Gastrocnemius medialis (tissue), 4 donors: ENCODE measurements at regions of chr17 and their contacts with region 1.

Region 1: DNA sequence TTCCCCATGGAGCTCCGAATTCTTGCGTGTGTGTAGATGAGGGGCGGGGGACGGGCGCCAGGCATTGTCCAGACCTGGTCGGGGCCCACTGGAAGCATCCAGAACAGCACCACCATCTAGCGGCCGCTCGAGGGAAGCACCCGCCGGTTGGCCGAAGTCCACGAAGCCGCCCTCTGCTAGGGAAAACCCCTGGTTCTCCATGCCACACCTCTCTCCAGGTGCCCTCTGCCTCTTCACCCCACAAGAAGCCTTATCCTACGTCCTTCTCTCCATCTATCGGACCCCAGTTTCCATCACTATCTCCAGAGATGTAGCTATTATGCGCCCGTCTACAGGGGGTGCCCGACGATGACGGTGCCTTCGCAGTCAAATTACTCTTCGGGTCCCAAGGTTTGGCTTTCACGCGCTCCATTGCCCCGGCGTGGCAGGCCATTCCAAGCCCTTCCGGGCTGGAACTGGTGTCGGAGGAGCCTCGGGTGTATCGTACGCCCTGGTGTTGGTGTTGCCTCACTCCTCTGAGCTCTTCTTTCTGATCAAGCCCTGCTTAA is 617 bp upstream of the SENP3 start:
- DNase-seq: peak; percentile 87 to 93
- ATAC-seq: peak; percentile 83
- H3K4me3 ChIP-seq: peak overlapping the region; percentile 87 to 95 (median 88)
- H3K27ac ChIP-seq: peak overlapping the region; percentile 93 to 96 (median 96)
- H3K4me1 ChIP-seq: peaks cover 48 to 62% of the 10 kb centered on the region in 2 donors
- H3K27me3 ChIP-seq: no peaks in the 10 kb centered on the region
- CTCF ChIP-seq: peak; percentile 90 to 91 (median 90)
- POLR2A ChIP-seq: no peak

Region 2: DNA sequence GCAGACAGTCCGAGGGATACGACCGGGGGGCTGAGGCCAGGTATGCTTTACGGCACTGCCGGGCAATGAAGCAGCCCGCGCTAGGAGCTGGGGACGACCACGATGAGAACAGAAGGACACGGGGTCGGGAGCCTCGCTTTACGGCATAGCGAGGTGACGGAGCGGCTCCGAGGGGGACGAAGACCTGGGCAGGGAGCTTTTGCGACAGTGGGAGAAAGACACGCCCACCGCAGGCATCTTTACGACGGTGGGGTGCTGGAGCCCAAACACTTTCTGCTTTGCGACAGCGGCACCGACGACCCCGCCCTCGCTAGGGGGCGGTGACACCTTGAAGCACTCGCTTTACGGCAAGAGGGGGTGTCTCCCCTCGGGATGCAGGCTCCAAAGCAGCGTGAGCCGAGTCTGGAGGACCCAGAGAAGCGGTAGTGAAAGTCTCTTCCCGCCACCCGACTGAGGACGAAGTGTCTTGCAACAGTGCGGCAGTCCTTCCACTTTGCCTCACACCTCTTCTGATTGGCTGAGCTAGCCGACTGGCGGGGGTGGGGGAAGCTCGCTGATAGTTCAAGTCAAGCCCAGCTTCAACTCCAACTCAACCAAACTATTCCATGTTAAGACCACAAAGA is 231.6 kb before region 1 on chr17:
- in situ Hi-C with region 1: no loop called
- intact Hi-C with region 1: loop called (anchors 5 kb)
- DNase-seq: peak; percentile 97 to 99
- ATAC-seq: peak; percentile 87 to 88
- H3K4me3 ChIP-seq: peak overlapping the region; percentile 78 to 99 (median 93)
- H3K27ac ChIP-seq: peak overlapping the region; percentile 94 to 99 (median 96)
- H3K4me1 ChIP-seq: peaks cover 15 to 24% of the 10 kb centered on the region in 2 donors
- H3K27me3 ChIP-seq: peaks cover 0 to 3% (median 2%) of the 10 kb centered on the region in 3 donors
- CTCF ChIP-seq: no peak
- POLR2A ChIP-seq: peak; percentile 87 to 92

Region 3: GRCh38 chr17:7403977-7404736 is 156.9 kb before region 1 on chr17 and contains the start of gene TMEM256:
- in situ Hi-C with region 1: no loop called
- intact Hi-C with region 1: loop called (anchors 2 kb)
- DNase-seq: peak; percentile 100
- ATAC-seq: peak; percentile 90
- H3K4me3 ChIP-seq: peak within 1 kb of the TSS; percentile 62 to 81 (median 70)
- H3K27ac ChIP-seq: peak within 1 kb of the TSS; percentile 92 to 97 (median 92)
- H3K4me1 ChIP-seq: peaks cover 19 to 20% of the 10 kb centered on the region in 2 donors
- H3K27me3 ChIP-seq: no peaks in the 10 kb centered on the region
- CTCF ChIP-seq: peak in 2 of 5 experiments; percentile 13 to 22
- POLR2A ChIP-seq: peak; percentile 94 to 96
- total RNA-seq, gene TMEM256: 28.9 to 65.6 (median 50.2) TPM

Region 4: DNA sequence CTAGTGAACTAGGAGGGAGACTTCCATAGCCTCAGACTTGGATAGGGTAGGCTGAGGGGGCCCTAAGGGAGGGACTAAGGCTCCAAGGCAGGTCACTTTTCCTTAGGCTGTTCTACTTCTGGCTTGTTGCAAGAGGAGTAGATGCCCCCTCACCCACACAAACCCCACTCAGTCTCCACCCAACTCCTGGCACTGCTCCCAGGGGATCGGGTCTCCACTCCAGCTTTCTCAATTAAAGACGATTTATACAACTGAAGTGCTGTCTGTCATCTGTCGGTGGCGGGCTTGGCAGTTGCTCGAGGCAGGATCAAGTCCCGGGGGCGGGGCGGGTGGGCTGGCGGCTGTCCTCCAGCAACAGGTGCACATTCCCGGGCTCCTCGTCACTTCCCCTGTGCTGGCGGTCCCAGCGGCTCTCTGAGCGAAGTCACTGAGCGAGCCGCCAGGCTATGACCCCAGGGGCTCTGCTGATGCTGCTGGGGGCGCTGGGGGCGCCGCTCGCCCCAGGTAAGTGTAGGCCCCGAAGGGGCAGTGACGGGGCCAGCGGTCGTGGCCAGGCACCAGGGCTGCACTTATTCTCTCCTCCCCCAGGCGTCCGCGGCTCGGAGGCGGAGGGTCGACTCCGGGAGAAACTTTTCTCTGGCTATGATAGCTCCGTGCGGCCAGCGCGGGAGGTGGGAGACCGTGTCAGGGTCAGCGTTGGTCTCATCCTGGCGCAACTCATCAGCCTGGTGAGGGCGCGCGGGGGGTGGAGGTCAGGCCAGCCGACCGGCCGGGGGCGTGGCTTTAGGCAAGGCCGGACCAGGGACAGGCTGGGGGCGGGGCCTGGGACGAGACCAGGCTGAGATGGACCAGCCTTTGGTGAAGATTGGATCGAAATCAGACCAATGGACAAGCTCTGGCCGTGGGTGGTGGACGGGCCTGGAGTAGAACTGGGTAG is 116.2 kb before region 1 on chr17 and contains the start of gene CHRNB1:
- in situ Hi-C with region 1: loop called in 1 of 4 experiments (anchors 25 kb)
- intact Hi-C with region 1: loop called (anchors 2 kb)
- DNase-seq: peak; percentile 78 to 91
- ATAC-seq: peak; percentile 78 to 81
- H3K4me3 ChIP-seq: peak within 1 kb of the TSS; percentile 69 to 87 (median 77)
- H3K27ac ChIP-seq: peak within 1 kb of the TSS; percentile 94 to 100 (median 98)
- H3K4me1 ChIP-seq: peaks cover 22 to 42% of the 10 kb centered on the region in 2 donors
- H3K27me3 ChIP-seq: no peaks in the 10 kb centered on the region
- CTCF ChIP-seq: peak in 3 of 5 experiments; percentile 18 to 34 (median 34)
- POLR2A ChIP-seq: peak; percentile 75 to 87
- total RNA-seq, gene CHRNB1: 82.3 to 202 (median 101) TPM

Region 5: DNA sequence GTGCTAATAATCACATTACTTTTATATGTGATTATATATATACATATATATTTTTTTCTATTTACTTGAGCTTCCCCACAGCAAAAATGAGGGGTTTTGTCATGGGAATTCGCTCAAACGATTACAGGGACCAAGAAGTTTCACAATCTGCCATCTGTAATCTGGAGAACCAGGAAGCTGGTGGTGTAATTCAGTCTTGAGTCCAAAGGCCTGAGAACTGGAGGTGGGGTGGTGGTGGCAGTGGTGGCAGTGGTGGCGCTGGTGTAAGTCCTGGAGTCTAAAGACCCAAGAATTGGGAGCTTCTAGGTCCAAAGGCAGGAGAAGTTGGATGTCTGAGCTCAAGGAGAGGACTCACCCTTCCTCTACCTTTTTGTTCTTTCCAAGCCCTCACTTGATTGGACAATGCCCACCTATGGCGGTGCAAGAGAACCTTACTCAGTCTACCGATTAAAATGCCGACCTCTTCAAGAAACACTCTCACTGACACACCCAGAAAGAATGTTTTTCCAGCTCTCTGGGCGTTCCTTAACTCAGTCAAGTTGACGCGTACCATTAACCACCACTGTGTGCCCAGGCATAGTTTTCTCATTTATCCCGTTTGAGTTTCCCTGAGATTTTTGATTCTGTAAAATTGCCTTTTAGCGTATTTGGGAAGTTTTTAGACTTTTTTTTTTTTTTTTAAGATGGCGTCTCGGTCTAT is 45.0 kb before region 1 on chr17:
- in situ Hi-C with region 1: no loop called
- intact Hi-C with region 1: loop called (anchors 1 kb)
- DNase-seq: no peak
- ATAC-seq: no peak
- H3K4me3 ChIP-seq: no peak overlapping the region
- H3K27ac ChIP-seq: no peak overlapping the region
- H3K4me1 ChIP-seq: no peaks in the 10 kb centered on the region
- H3K27me3 ChIP-seq: no peaks in the 10 kb centered on the region
- CTCF ChIP-seq: no peak
- POLR2A ChIP-seq: no peak

Region 6: DNA sequence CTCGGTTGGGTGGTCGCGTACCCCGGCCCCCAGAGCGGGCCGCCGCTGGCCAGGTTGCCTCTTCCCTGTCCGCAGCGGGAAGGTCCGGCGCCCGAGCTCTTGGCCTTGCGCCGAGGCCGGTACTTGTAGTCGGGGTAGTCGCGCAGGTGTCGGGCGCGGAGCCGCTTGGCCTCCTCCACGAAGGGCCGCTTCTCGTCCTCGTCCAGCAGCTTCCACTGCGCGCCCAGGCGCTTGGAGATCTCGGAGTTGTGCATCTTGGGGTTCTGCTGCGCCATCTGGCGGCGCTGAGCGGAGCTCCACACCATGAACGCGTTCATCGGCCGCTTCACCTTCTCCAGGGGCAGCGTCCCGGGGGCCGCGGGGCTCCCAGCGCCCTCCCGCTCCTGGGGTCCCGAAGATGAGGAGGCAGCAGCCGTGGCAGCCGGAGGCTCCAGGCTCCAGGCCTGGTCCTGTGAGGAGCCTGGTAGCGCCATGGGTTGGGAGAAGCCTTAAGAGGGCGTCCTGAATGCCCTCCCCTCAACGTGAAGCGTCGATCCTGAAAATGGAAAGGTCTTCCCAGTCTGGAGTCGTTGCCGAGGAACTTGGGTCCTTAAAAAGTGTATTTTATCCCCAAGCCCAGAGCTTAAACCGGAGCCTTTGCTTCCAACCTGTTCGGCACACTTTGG is 28.2 kb after region 1 on chr17:
- in situ Hi-C with region 1: no loop called
- intact Hi-C with region 1: loop called (anchors 2 kb)
- DNase-seq: peak; percentile 56 to 87
- ATAC-seq: peak; percentile 77 to 79
- H3K4me3 ChIP-seq: peak overlapping the region; percentile 42 to 59 (median 50)
- H3K27ac ChIP-seq: peak overlapping the region; percentile 64 to 81 (median 78)
- H3K4me1 ChIP-seq: peaks cover 23 to 36% of the 10 kb centered on the region in 2 donors
- H3K27me3 ChIP-seq: no peaks in the 10 kb centered on the region
- CTCF ChIP-seq: peak; percentile 79 to 94 (median 92)
- POLR2A ChIP-seq: no peak

Region 7: GRCh38 chr17:7687908-7688807 is 127.1 kb after region 1 on chr17 and contains the start of gene WRAP53:
- in situ Hi-C with region 1: no loop called
- intact Hi-C with region 1: loop called (anchors 1 kb)
- DNase-seq: peak; percentile 98 to 99
- ATAC-seq: peak; percentile 86 to 88
- H3K4me3 ChIP-seq: peak within 1 kb of the TSS; percentile 80 to 96 (median 90)
- H3K27ac ChIP-seq: peak within 1 kb of the TSS; percentile 94 to 97 (median 94)
- H3K4me1 ChIP-seq: peaks cover 26 to 34% of the 10 kb centered on the region in 2 donors
- H3K27me3 ChIP-seq: no peaks in the 10 kb centered on the region
- CTCF ChIP-seq: peak; percentile 96 to 100 (median 98)
- POLR2A ChIP-seq: peak in 1 of 2 donors; percentile 36
- total RNA-seq, gene WRAP53: 2.6 to 5.8 (median 3.7) TPM